ENCODE measurements at regions of chr3 and their contacts with region 1.

Region 1: GRCh38 chr3:150763122-150763841 is at the start of gene SIAH2:
- DNase-seq: peak; percentile 96
- ATAC-seq: peak; percentile 77
- H3K4me3 ChIP-seq: peak within 1 kb of the TSS; percentile 89
- H3K27ac ChIP-seq: peak within 1 kb of the TSS; percentile 83
- H3K4me1 ChIP-seq: peaks cover 48% of the 10 kb centered on the region
- H3K27me3 ChIP-seq: no peaks in the 10 kb centered on the region
- CTCF ChIP-seq: no peak
- total RNA-seq, gene SIAH2: 37.8 and 51.8 TPM in 2 replicates

Region 2: GRCh38 chr3:150210461-150211110 is 552.7 kb before region 1 on chr3:
- CTCF ChIA-PET with region 1: no interaction called
- POLR2A ChIA-PET with region 1: interaction called, 14 read pairs
- intact Hi-C with region 1: no loop called
- DNase-seq: no peak
- ATAC-seq: no peak; the same call in 1 of the 2 replicates
- H3K4me3 ChIP-seq: no peak overlapping the region
- H3K27ac ChIP-seq: no peak overlapping the region
- H3K4me1 ChIP-seq: no peaks in the 10 kb centered on the region
- H3K27me3 ChIP-seq: no peaks in the 10 kb centered on the region
- CTCF ChIP-seq: no peak

Region 3: DNA sequence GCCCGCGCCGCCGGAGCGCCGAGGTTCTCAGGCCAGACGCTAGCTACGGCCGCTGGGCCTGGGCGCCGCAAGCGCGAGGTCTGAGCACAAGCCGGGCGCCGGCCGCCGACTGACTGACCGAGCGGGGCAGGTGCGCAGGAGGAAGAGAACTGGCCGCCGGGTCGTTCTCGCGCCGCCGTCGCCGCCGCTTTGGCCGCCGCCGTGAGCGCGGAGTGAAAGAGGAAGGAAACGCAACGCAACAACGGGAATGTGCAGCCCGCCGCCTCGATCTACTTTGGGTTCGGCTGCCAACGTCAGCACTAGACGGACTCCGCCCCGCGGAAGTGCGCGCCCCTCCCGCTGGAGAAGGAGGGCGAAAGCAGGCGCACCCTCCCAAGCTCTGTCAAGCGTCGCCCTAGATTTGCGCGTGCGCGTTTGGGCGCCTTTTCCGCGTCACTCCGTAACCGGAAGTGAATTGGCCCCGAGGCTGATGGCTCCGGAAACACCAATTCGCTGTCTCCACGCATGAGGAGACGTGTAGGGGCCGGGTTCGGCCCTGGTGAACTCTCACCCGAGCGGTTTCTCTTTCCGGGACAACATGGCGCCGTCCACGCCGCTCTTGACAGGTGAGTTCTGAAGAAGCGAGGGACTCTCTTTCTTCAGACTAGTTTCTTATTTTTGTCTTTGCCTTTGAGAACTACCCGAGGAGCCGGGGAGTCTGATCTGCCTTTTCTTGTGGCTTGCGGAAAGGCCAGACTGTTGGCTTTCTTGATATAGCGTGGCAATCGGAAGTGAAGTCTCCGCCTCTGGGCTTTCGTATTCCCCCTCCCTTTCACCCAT is 216.8 kb before region 1 on chr3 and contains the starts of genes EIF2A and SERP1:
- CTCF ChIA-PET with region 1: no interaction called
- POLR2A ChIA-PET with region 1: interaction called, 7 read pairs
- intact Hi-C with region 1: loop called (anchors 5 kb)
- DNase-seq: peak; percentile 100
- ATAC-seq: peak; percentile 90
- H3K4me3 ChIP-seq: peak within 1 kb of the TSS; percentile 77
- H3K27ac ChIP-seq: peak within 1 kb of the TSS; percentile 83
- H3K4me1 ChIP-seq: peaks cover 33% of the 10 kb centered on the region
- H3K27me3 ChIP-seq: no peaks in the 10 kb centered on the region
- CTCF ChIP-seq: no peak
- total RNA-seq, gene EIF2A: 67.9 and 92.4 TPM in 2 replicates
- total RNA-seq, gene SERP1: 439 and 552 TPM in 2 replicates

Region 4: GRCh38 chr3:150603153-150603979 is 159.9 kb before region 1 on chr3 and contains the start of gene SELENOT:
- CTCF ChIA-PET with region 1: no interaction called
- POLR2A ChIA-PET with region 1: no interaction called
- intact Hi-C with region 1: loop called (anchors 2 kb)
- DNase-seq: peak; percentile 97
- ATAC-seq: peak; percentile 69
- H3K4me3 ChIP-seq: peak within 1 kb of the TSS; percentile 94
- H3K27ac ChIP-seq: peak within 1 kb of the TSS; percentile 85
- H3K4me1 ChIP-seq: peaks cover 42% of the 10 kb centered on the region
- H3K27me3 ChIP-seq: no peaks in the 10 kb centered on the region
- CTCF ChIP-seq: peak; percentile 40
- total RNA-seq, gene SELENOT: 109 and 119 TPM in 2 replicates

Region 5: GRCh38 chr3:150631515-150632221 is 131.6 kb before region 1 on chr3:
- CTCF ChIA-PET with region 1: no interaction called
- POLR2A ChIA-PET with region 1: no interaction called
- intact Hi-C with region 1: no loop called
- DNase-seq: no peak
- ATAC-seq: no peak
- H3K4me3 ChIP-seq: no peak overlapping the region
- H3K27ac ChIP-seq: no peak overlapping the region
- H3K4me1 ChIP-seq: peaks cover 5% of the 10 kb centered on the region
- H3K27me3 ChIP-seq: no peaks in the 10 kb centered on the region
- CTCF ChIP-seq: no peak

Region 6: GRCh38 chr3:150703299-150704134 is 59.8 kb before region 1 on chr3 and contains the start of gene ERICH6:
- CTCF ChIA-PET with region 1: interaction called, 5 read pairs
- POLR2A ChIA-PET with region 1: interaction called, 16 read pairs
- intact Hi-C with region 1: no loop called
- DNase-seq: peak; percentile 92
- ATAC-seq: peak; percentile 97
- H3K4me3 ChIP-seq: peak within 1 kb of the TSS; percentile 88
- H3K27ac ChIP-seq: 0 out of 2 replicates have a peak within 1 kb of the TSS, but pooled peaks have one; percentile 15
- H3K4me1 ChIP-seq: peaks cover 12% of the 10 kb centered on the region
- H3K27me3 ChIP-seq: no peaks in the 10 kb centered on the region
- CTCF ChIP-seq: no peak
- total RNA-seq, gene ERICH6: not detected in 2 replicates

Region 7: GRCh38 chr3:150744041-150744918 is 19.0 kb before region 1 on chr3:
- CTCF ChIA-PET with region 1: interaction called, 4 read pairs
- POLR2A ChIA-PET with region 1: no interaction called
- intact Hi-C with region 1: loop called (anchors 1 kb)
- DNase-seq: peak; percentile 57
- ATAC-seq: peak; percentile 77
- H3K4me3 ChIP-seq: no peak overlapping the region
- H3K27ac ChIP-seq: peak overlapping the region; percentile 38
- H3K4me1 ChIP-seq: peaks cover 29% of the 10 kb centered on the region
- H3K27me3 ChIP-seq: no peaks in the 10 kb centered on the region
- CTCF ChIP-seq: no peak

Region 8: DNA sequence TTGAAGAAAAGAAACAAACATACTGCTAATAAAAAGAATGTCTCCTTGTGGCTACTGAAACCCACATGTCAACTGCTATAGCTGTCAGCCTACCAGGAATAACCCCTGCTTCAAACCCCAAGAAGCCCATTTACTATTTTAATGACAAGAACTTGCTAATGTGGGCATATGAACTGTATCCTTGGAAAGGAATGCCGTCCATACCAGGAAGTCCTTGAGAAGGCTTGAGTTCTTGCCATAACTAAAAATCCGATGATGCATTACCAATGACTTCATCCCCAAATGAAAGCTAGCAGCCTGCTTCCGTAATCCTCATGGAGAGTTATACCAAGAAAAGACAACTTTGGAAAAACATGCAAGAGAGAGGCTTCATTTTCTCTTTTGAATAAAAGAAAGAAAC is 107.1 kb after region 1 on chr3:
- CTCF ChIA-PET with region 1: interaction called, 3 read pairs
- POLR2A ChIA-PET with region 1: no interaction called
- intact Hi-C with region 1: loop called (anchors 1 kb)
- DNase-seq: no peak
- ATAC-seq: no peak
- H3K4me3 ChIP-seq: no peak overlapping the region
- H3K27ac ChIP-seq: no peak overlapping the region
- H3K4me1 ChIP-seq: no peaks in the 10 kb centered on the region
- H3K27me3 ChIP-seq: peaks cover 15% of the 10 kb centered on the region; the same call in 1 of the 2 replicates
- CTCF ChIP-seq: no peak

Measured in PC-3 (cell line).